HEK293T (cell line): ENCODE measurements at regions of chr16 and their contacts with region 1.

Region 1: GRCh38 chr16:71484006-71484893 is 4.9 kb downstream of the ZNF19 start:
- DNase-seq: peak; percentile 86

Region 2: DNA sequence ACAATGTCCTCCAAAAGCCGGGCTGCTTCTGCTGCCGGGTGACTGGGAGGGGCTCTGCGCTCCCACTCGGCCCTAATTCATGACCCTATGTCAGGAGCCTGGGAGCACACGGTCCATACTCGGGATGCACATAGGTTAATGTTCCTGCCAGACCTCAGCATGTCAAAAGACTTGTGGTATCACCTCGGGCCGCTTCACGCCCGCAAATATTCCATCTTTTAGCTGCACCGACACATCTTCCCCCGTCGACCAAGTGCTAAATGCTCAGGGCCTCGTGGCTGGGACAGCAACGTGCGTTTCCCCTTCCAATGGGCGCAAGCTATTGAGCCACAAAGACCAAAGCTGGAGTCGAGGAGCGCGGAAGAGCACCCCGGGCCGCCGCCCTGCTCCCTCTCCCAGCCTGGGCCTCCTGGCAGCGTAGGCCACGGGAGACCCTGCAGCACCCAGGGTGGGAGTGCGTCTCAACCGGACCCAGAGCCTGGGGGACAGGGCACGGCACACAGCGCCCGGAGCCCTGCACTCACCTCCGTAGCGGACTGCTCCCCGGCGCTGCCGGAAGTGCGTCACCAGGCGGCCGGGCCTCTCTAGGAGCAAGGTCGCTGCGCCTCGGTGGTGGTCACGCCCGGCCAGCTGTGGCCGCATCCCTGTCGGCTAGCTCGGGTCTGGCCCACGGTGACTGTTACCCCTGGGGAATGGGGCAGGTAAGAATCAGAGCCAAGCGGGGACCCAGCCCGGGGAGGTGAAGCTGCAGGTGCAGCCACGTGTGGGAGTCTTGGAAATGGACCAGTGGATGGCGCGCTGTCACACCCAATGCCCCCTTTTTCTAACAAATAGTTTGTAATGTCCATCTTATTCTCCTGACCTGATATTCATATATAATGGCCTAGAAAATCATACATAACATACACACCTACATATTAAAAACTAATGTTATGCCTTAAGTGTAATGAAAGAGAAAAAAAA is 22.3 kb before region 1 on chr16 and contains the start of gene ZNF23:
- CTCF ChIA-PET with region 1: interaction called, 4 read pairs
- POLR2A ChIA-PET with region 1: interaction called, 29 read pairs
- DNase-seq: peak; percentile 91

Region 3: DNA sequence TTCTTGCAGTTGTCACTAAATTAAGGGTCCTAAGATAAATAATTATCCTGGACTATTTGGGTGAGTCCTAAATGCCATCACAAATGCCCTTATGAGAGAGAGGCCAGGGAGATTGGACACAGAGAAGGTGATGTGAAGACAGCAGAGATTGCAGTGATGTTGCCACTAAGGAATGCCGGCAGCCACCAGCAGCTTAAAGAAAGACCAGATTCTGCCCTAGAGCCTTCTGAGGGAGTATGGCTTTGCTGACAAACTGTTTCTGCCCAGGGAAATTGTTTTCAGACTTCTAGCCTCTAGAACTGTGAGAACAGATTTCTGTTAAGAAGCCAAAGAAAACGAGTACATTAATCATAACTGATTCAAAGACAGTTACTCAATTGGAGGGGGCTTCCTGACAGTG is 12.2 kb before region 1 on chr16:
- CTCF ChIA-PET with region 1: no interaction called
- POLR2A ChIA-PET with region 1: interaction called, 10 read pairs
- DNase-seq: no peak